ENCODE measurements at regions of chr10 and their contacts with region 1.

Region 1: GRCh38 chr10:90862908-90863514 is 5.2 kb upstream of the HTR7 start:
- DNase-seq: peak; percentile 58
- H3K27ac ChIP-seq: no peak overlapping the region
- CTCF ChIP-seq: peak; percentile 93

Region 2: GRCh38 chr10:90751107-90751997 is 111.7 kb before region 1 on chr10:
- CTCF ChIA-PET with region 1: interaction called, 15 read pairs
- POLR2A ChIA-PET with region 1: no interaction called
- DNase-seq: peak; percentile 89
- H3K27ac ChIP-seq: no peak overlapping the region
- CTCF ChIP-seq: peak; percentile 75

Region 3: DNA sequence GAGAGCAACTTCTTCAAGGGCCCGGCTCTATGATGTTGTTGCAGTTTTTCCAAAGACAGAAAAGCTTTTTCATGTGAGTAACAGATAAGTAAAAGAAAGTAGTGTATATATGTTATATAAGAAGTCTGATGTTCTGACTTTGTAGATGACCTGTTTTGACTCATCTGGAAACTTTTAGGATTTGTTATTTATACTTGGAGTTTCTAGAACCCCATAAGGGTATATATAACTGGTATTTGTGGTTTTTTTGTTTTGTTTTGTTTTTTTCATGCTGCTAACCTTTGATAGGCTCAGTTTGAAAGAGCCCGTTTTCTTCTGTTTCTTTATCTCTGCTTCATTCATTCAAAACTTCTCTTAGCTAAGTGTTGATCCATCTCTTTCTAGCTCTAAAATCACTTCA is 16.1 kb after region 1 on chr10:
- CTCF ChIA-PET with region 1: interaction called, 12 read pairs
- POLR2A ChIA-PET with region 1: no interaction called
- DNase-seq: no peak
- H3K27ac ChIP-seq: no peak overlapping the region
- CTCF ChIP-seq: no peak

Region 4: DNA sequence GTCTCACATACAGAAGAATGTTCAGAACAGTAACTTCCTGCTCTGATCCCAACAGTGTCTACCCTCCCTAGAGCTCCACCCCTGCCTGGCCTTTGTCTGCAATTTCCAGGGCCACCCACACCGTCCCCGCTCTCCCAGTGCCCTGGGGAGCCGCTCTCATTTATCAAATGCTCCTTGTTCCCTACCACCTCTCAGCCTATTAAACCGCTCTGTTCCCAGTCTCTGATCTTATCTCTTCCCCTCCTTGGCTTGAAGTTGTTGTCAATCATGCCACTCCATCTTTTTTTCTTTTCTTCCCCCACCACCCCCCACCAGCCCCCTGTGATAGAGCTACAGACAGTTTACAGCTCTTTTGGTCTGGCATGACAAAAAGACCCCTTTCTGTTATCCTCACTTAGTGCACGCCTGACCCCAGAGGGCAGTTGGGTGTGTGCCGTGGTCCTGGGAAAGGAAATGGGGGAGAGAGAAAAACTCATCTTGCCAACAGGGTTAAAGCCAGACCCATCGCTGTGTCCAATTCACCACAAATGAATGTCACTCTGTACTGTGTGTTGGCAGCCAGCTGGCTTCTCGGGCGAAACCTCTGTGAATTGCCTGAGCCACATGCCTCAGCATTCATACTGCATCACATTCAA is 518.4 kb after region 1 on chr10:
- CTCF ChIA-PET with region 1: no interaction called
- POLR2A ChIA-PET with region 1: no interaction called
- DNase-seq: no peak
- H3K27ac ChIP-seq: no peak overlapping the region
- CTCF ChIP-seq: no peak